ENCODE measurements at regions of chr2 and their contacts with region 1.

Region 1: GRCh38 chr2:172813314-172813888 is 77.8 kb downstream of the RAPGEF4 start:
- DNase-seq: peak in 3 of 7 donors; percentile 25 to 43 (median 31)
- H3K4me3 ChIP-seq: no peak overlapping the region
- H3K27ac ChIP-seq: no peak overlapping the region
- H3K4me1 ChIP-seq: peaks cover 0 to 12% of the 10 kb centered on the region in 2 donors
- H3K27me3 ChIP-seq: no peaks in the 10 kb centered on the region
- CTCF ChIP-seq: peak; percentile 25 to 81 (median 65)
- POLR2A ChIP-seq: no peak

Region 2: DNA sequence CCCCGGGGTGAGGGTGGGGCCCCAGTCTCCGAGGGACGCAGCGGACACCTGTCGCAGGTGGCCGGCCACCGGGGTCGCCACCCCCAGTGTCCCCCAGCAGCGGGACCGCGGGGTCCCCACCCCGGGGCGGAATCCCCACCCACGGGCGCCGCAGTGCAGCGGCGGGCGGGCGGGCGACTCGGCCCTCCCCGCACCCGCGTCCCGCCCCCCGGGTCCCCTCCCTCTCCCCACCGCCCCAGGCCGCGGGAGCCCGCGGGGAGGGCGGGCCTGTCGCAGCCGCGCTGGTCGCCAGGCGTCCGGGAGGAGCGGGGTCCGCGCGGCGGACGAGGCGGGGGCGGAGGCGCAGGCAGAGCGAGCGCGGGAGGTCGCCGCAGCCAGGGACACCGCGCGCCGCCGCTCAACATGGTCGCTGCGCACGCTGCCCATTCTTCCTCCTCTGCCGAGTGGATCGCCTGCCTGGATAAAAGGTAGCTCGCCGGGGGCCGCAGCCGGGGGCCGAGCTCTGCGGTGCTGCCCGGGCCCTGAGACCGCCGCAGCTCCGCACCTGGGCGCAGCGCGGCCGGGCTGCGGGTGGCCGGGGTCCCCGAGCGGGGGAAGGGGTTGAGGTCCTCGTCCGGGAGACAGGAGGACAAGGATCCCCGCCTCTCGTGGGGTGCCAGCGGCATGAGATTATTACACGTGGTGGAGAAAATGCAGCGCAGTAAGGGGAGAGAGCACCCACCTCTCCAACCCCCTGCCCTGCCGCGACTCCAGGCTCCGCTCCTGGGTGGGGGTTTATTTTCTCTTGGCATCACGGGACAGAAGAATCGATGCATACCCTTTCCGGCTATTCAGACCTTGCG is 77.6 kb before region 1 on chr2 and contains the start of gene RAPGEF4:
- intact Hi-C with region 1: no loop called
- DNase-seq: peak in 1 of 7 donors; percentile 2
- H3K4me3 ChIP-seq: peak within 1 kb of the TSS in 2 of 4 donors; percentile 9 to 63
- H3K27ac ChIP-seq: no peak within 1 kb of the TSS
- H3K4me1 ChIP-seq: peaks cover 11 to 14% of the 10 kb centered on the region in 2 donors
- H3K27me3 ChIP-seq: peaks cover 19% of the 10 kb centered on the region
- CTCF ChIP-seq: no peak
- POLR2A ChIP-seq: no peak
- total RNA-seq, gene RAPGEF4: 41.6 to 288 (median 162) TPM

Region 3: GRCh38 chr2:172931918-172932520 is 118.6 kb after region 1 on chr2:
- intact Hi-C with region 1: loop called (anchors 5 kb)
- DNase-seq: peak; percentile 66 to 90 (median 80)
- H3K4me3 ChIP-seq: peak overlapping the region in 1 of 4 donors; percentile 21
- H3K27ac ChIP-seq: peak overlapping the region in 3 of 5 donors; percentile 49 to 82 (median 80)
- H3K4me1 ChIP-seq: peaks cover 11 to 60% of the 10 kb centered on the region in 2 donors
- H3K27me3 ChIP-seq: no peaks in the 10 kb centered on the region
- CTCF ChIP-seq: peak; percentile 66 to 76 (median 74)
- POLR2A ChIP-seq: no peak

Measured in adrenal gland (tissue), 19 donors.